ENCODE measurements at regions of chr1 and their contacts with region 1.

Region 1: GRCh38 chr1:40161125-40161887 is at the start of gene RLF:
- DNase-seq: peak; percentile 94
- H3K4me3 Mint-ChIP-seq: no peak within 1 kb of the TSS
- H3K27ac Mint-ChIP-seq: no peak within 1 kb of the TSS
- H3K4me1 Mint-ChIP-seq: peaks cover 6% of the 10 kb centered on the region
- H3K27me3 Mint-ChIP-seq: no peaks in the 10 kb centered on the region
- total RNA-seq, gene RLF: 18.2 and 19.9 TPM in 2 replicates

Region 2: GRCh38 chr1:39196244-39197215 is 964.8 kb before region 1 on chr1:
- intact Hi-C with region 1: loop called (anchors 2 kb)
- DNase-seq: peak; percentile 51
- H3K4me3 Mint-ChIP-seq: peak overlapping the region; percentile 76
- H3K27ac Mint-ChIP-seq: peak overlapping the region; percentile 96
- H3K4me1 Mint-ChIP-seq: peaks cover 77% of the 10 kb centered on the region
- H3K27me3 Mint-ChIP-seq: no peaks in the 10 kb centered on the region

Region 3: DNA sequence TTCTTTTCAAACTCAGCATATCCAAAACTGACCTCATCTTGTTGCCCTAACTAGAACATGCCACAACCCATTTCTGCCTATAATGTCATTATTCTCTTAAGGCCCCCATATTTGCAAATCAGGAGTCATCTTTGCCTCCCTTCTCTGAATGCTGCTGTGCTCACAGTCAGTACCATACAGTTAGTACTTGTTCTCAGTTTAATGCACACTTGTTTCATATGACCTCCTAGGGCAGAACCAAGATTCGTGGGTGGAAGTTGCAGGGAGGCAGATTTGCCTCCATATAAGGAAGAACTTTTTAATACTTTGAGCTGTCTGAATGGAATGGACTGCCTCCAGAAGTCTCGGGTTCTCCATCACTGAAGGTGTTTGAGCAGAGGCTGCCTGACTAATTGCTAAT is 111.6 kb before region 1 on chr1:
- intact Hi-C with region 1: no loop called
- DNase-seq: no peak
- H3K4me3 Mint-ChIP-seq: peak overlapping the region; percentile 32
- H3K27ac Mint-ChIP-seq: peak overlapping the region; percentile 76
- H3K4me1 Mint-ChIP-seq: peaks cover 80% of the 10 kb centered on the region
- H3K27me3 Mint-ChIP-seq: no peaks in the 10 kb centered on the region

Region 4: GRCh38 chr1:40185951-40186864 is 24.9 kb after region 1 on chr1:
- intact Hi-C with region 1: loop called (anchors 1 kb)
- DNase-seq: peak; percentile 21
- H3K4me3 Mint-ChIP-seq: peak overlapping the region; percentile 72
- H3K27ac Mint-ChIP-seq: peak overlapping the region; percentile 69
- H3K4me1 Mint-ChIP-seq: peaks cover 62% of the 10 kb centered on the region
- H3K27me3 Mint-ChIP-seq: no peaks in the 10 kb centered on the region

Region 5: DNA sequence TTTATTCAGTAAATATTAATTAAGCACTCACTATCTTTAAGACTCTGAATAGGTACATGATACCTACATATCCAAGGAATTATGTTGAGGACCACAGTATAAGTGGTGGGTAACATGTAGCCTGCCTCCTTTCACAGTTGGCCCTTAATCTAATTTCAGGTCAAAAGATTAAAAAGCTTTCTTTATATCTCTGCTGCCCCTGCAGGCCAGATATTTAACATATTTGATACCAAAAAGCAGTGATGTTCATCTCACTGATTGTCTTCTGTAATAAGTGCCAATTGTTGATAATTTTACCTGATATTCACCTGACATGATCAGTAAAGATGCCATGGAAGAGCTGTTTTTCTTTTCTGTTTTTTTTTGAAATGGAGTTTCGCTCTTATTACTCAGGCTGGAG is 36.4 kb after region 1 on chr1:
- intact Hi-C with region 1: no loop called
- DNase-seq: no peak
- H3K4me3 Mint-ChIP-seq: no peak overlapping the region
- H3K27ac Mint-ChIP-seq: no peak overlapping the region
- H3K4me1 Mint-ChIP-seq: no peaks in the 10 kb centered on the region
- H3K27me3 Mint-ChIP-seq: no peaks in the 10 kb centered on the region

Region 6: DNA sequence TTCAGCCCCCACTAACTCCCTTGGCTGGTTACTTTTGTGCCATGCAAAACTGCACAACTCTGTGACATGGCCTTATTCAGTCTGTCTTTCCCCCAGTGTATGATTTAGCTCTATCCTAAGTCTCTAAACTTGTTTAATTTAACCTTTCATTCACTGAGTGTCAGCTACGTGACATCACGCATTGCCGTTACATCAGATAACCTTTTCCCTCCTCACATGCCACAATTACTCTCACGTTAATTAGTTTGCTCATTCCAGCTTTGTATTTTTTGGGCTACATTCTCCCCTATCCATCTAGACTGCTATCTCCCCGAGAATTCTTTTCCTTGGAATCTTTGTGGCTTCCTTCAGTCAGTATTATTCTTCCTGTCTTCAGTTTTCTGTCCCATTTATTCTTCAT is 57.0 kb after region 1 on chr1:
- intact Hi-C with region 1: no loop called
- DNase-seq: no peak
- H3K4me3 Mint-ChIP-seq: no peak overlapping the region
- H3K27ac Mint-ChIP-seq: no peak overlapping the region
- H3K4me1 Mint-ChIP-seq: peaks cover 30% of the 10 kb centered on the region
- H3K27me3 Mint-ChIP-seq: no peaks in the 10 kb centered on the region

Region 7: DNA sequence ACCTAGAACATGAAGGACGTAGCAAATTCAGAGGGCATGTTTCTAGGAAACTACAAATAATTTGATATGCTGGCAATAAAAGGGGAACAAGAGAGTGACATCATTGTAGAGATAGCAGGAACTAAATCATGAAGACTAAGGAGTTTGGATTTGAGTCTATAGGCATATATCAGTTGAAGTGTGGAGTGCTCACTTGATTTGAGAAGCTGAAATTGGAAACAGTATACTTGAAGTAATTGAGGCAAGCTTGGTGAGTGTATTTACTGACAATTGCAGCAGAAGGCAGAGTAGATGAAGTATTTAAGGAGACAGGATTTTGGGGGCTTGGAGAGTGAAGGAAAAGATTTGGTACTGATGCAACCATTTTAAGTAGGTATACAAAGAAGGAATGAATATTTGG is 80.1 kb after region 1 on chr1:
- intact Hi-C with region 1: loop called (anchors 5 kb)
- DNase-seq: no peak
- H3K4me3 Mint-ChIP-seq: peak overlapping the region; percentile 23
- H3K27ac Mint-ChIP-seq: peak overlapping the region; percentile 94
- H3K4me1 Mint-ChIP-seq: peaks cover 77% of the 10 kb centered on the region
- H3K27me3 Mint-ChIP-seq: no peaks in the 10 kb centered on the region

Region 8: GRCh38 chr1:40315239-40315794 is 154.0 kb after region 1 on chr1:
- intact Hi-C with region 1: loop called (anchors 1 kb)
- DNase-seq: peak; percentile 77
- H3K4me3 Mint-ChIP-seq: peak overlapping the region; percentile 78
- H3K27ac Mint-ChIP-seq: peak overlapping the region; percentile 23
- H3K4me1 Mint-ChIP-seq: peaks cover 49% of the 10 kb centered on the region
- H3K27me3 Mint-ChIP-seq: peaks cover 13% of the 10 kb centered on the region

Region 9: DNA sequence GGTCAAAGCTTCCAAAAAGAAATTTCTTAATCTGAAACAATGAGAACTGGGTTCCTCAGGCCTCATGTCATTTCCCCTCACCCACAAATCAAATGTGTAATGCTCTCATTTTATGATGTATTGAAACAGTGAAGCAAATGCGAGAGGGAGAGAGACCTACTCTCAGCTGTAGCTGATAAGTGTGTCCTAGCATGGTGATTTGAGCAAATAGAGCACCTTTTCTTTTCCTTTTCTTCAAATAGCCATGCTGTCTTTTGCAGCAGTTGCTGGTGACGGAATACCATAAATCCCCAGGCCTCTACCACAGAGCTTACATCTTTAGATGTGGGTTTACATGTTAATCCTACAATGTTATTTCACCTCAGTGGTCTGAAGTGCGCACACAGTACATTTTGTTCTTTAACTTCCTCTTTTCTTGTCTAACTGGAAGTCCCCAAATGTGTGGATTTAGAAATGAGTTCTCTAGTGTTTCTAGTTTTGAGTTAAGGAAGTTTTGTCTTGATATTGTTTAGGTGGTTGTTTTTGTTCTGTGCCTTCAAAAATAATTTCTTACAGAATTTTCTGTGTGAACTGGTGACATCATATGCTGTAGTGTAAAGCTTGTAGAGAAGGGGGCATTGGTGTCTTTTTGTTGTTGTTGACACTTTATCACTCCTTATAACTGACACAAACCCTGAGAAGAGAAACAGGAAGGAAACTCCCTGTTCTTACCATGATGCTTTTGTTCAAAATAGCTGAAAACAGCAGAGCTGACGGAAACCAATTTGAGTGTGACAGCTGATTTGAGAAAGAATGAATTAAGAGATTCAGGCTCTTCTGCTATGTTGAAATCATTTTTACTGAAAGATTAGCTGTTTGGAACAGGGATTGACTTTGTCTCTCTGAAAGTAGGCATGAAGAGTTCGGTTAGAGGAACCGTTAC is 224.4 kb after region 1 on chr1:
- intact Hi-C with region 1: loop called (anchors 5 kb)
- DNase-seq: peak; percentile 73
- H3K4me3 Mint-ChIP-seq: peak overlapping the region; percentile 82
- H3K27ac Mint-ChIP-seq: peak overlapping the region; percentile 99
- H3K4me1 Mint-ChIP-seq: peaks cover 89% of the 10 kb centered on the region
- H3K27me3 Mint-ChIP-seq: no peaks in the 10 kb centered on the region